ENCODE measurements at regions of chr18 and their contacts with region 1.

Region 1: DNA sequence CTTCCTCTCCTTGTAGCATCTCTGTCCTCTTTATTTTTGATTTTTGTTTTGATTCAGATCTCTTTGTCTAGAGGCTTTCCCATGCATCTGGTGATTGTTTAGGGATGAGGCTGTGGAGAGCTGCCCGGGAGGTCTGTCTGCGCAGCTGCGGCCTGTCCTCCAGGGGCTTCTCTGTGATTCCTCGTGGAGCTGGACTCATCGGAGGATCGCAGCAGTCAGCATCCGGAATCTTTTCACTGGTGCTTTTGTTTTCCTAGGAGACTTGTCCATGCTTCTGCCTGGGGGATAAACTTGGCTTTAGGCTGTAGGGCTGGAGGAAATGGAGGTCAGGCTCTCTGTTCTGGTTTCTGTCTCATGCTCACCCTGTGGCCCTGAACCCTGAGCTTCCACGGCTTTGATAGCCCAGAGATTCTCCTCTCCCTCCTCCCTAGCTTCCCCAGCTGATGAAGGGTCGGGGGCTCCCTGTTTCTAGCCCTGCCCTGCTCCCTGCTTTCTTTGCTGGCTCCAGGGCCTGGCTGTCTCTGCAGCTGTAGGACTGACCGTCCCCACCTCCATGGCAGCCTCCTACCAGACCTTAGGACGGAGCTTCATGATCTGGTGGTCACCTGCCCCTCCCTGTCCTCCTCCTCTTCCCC is 35.5 kb downstream of the ZNF532 start:
- DNase-seq: no peak
- H3K4me3 Mint-ChIP-seq: no peak overlapping the region
- H3K27ac Mint-ChIP-seq: no peak overlapping the region
- H3K4me1 Mint-ChIP-seq: peaks cover 13% of the 10 kb centered on the region
- H3K27me3 Mint-ChIP-seq: peaks cover 3% of the 10 kb centered on the region

Region 2: DNA sequence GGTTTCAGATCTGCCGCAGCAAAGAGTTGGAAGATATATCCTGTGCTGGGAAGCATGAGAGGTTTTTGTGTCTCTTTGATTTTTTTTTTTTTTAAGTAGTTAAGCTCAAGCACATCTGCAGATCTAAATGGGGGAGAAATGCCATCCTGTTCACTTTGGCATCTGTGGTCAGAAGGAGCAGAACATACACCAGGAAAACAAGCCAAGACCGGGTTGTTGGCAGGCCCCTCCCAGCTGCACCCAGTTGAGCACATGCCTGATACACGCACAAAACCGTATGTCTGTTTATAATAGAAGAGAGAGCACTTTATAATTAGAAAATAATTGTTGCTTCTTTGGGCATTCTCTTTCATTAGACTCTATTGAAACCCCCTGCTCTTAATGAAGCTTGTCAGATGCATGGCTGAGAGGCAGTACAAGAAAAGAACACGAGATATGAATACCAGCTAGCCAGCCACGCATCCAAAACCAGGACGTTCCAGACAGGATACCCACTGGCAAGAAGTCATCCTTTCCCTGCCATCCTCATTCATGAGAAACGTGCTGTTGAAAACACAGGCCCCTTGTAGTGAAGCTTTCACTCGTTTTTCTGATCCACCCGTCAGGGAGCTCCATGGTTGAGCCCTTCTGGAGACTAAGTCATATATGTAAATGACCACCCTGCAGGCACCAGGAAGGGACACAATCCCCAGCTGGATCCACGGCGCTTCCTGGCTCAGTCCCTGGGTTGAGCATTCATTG is 423.4 kb before region 1 on chr18:
- CTCF ChIA-PET with region 1: no interaction called
- intact Hi-C with region 1: no loop called
- DNase-seq: no peak
- H3K4me3 Mint-ChIP-seq: no peak overlapping the region
- H3K27ac Mint-ChIP-seq: no peak overlapping the region
- H3K4me1 Mint-ChIP-seq: no peaks in the 10 kb centered on the region
- H3K27me3 Mint-ChIP-seq: no peaks in the 10 kb centered on the region

Region 3: GRCh38 chr18:58947136-58947732 is 47.1 kb after region 1 on chr18:
- CTCF ChIA-PET with region 1: no interaction called
- intact Hi-C with region 1: loop called (anchors 5 kb)
- DNase-seq: no peak
- H3K4me3 Mint-ChIP-seq: no peak overlapping the region
- H3K27ac Mint-ChIP-seq: no peak overlapping the region
- H3K4me1 Mint-ChIP-seq: no peaks in the 10 kb centered on the region
- H3K27me3 Mint-ChIP-seq: no peaks in the 10 kb centered on the region

Region 4: GRCh38 chr18:59387687-59388565 is 487.8 kb after region 1 on chr18:
- CTCF ChIA-PET with region 1: no interaction called
- intact Hi-C with region 1: no loop called
- DNase-seq: no peak
- H3K4me3 Mint-ChIP-seq: no peak overlapping the region
- H3K27ac Mint-ChIP-seq: no peak overlapping the region
- H3K4me1 Mint-ChIP-seq: no peaks in the 10 kb centered on the region
- H3K27me3 Mint-ChIP-seq: peaks cover 2% of the 10 kb centered on the region